MCF 10A (cell line): ENCODE measurements at regions of chr12 and their contacts with region 1.

Region 1: DNA sequence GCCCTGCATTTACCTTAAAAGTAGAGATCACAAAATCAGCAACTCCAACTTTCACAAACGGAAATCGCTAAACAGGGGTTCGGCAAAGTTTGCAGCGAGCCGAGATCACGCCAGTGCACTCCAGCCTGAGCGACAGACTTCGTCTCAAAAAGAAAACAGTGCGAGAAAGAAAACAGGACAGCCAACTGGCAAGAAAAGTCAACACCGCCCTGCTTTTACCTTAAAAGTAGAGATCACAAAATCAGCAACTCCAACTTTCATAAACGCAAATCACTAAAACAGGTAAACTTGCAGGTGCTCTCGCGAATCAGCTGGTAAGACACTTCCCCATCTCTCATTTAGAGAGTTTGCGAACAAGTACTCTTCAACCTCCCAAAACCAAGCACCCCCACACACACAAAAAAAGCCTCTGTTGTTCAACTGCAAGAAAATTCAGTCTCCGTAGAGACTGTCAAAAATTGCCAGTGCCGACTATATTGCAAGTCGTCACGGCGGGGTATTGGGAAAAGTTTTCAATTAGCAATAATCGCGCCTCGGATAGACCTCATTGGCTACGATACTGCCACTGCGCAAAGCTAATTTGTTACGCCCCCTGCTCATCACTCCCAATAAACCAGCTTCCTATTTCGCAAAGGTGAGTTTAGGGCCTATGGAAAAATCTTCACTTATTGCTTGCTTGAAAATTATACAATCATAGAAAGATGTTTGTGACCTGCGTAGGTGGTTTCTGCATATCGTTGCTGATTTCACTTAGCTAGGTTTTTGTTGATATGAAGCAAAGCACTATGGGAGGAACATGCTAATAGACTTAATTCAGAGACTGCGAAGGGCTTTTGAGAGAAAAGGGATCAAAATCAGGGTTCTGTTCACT is at the start of gene RNU4-1:
- DNase-seq: peak; percentile 95
- H3K4me3 Mint-ChIP-seq: no peak within 1 kb of the TSS
- H3K27ac Mint-ChIP-seq: no peak within 1 kb of the TSS
- H3K4me1 Mint-ChIP-seq: no peaks in the 10 kb centered on the region
- H3K27me3 Mint-ChIP-seq: no peaks in the 10 kb centered on the region
- CTCF ChIP-seq: no peak
- total RNA-seq, gene RNU4-1: 1,764 and 2,069 TPM in 2 replicates

Region 2: DNA sequence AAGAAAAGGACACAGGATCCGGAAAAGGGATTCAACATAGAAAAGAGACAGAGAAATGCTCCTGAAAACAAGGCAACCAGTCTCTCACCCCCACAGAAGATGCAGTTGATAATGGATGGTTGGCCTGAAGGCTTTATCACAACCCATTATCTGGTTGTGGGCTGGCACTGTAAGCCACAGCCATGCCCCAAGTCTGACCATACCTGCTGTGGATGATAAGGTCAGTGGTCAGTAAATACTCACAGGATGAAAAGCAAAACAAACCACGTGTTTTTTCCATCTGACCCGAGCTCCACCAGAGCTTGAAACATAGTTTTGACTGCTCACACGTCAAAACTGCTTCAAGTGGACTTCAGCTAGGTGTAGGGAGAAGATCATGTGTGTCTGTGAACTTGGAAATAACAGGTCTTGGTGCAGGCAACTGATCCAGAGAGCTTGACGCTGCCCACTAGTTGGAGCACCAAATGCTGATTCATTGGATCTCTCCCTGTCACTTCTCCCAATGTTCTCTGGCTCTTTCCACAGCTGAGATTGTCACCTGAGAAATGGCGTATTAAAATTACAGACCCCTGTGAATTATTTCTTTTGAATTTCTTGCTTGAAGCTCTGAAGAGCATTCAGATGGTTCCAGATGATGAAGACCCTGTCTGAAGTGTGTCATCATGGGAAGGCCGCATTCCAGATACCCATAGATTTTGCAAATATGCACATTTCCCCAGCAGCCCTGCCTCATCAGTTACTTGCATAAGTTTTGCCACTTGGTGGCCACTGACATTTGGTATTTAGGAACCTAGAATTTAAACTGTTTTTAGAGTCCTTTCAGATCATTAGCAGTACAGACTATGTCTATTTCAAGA is 690.8 kb before region 1 on chr12:
- CTCF ChIA-PET with region 1: no interaction called
- POLR2A ChIA-PET with region 1: no interaction called
- intact Hi-C with region 1: no loop called
- DNase-seq: no peak
- H3K4me3 Mint-ChIP-seq: no peak overlapping the region
- H3K27ac Mint-ChIP-seq: no peak overlapping the region
- H3K4me1 Mint-ChIP-seq: no peaks in the 10 kb centered on the region
- H3K27me3 Mint-ChIP-seq: peaks cover 26% of the 10 kb centered on the region
- CTCF ChIP-seq: no peak

Region 3: DNA sequence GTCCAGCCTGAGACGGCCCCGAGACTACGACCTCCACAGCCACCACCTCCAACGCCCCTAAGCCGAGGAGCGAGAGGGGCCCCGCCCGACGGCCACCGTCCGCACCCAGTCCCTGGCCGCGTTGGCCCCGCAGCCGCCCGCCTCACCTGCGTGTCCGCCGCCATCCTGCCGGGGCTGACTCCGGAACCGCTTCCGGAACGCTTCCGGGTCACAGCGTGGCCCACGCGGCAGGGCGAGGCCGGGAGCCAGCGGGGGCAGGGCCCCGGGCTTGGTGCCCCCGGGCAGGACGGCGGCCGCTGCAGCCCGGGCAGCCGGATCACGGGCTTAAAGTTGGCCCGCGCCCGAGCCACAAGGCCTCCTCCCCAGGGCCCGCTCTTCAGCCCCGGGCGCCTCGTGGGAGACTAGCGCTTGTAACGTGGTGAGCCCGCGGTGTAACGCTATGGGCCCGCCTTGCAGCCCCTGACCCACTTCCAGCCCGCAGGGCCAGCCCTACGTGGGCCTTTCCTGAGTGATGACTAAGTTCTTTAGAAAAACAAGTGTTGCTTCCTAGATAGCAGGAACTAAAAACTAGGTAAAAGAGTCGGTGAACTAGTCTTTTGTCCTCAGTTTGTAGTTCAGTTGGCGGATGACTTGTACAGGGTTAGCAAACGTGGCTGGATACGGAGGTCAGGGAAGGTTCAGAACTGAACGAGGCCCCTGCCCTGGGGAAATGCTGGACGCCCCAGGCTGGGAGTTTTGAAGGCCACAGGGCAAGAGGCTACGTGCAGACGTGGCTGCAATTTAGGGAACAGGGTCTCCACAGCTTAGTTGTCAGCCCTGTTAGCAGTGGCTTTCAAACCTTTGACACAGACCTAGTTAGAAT is 98.1 kb before region 1 on chr12 and contains the start of gene GCN1:
- CTCF ChIA-PET with region 1: interaction called, 3 read pairs
- POLR2A ChIA-PET with region 1: interaction called, 109 read pairs
- intact Hi-C with region 1: no loop called
- DNase-seq: peak; percentile 82
- H3K4me3 Mint-ChIP-seq: peak within 1 kb of the TSS; percentile 80
- H3K27ac Mint-ChIP-seq: peak within 1 kb of the TSS; percentile 89
- H3K4me1 Mint-ChIP-seq: peaks cover 23% of the 10 kb centered on the region
- H3K27me3 Mint-ChIP-seq: no peaks in the 10 kb centered on the region
- CTCF ChIP-seq: no peak
- total RNA-seq, gene GCN1: 116 and 117 TPM in 2 replicates

Region 4: DNA sequence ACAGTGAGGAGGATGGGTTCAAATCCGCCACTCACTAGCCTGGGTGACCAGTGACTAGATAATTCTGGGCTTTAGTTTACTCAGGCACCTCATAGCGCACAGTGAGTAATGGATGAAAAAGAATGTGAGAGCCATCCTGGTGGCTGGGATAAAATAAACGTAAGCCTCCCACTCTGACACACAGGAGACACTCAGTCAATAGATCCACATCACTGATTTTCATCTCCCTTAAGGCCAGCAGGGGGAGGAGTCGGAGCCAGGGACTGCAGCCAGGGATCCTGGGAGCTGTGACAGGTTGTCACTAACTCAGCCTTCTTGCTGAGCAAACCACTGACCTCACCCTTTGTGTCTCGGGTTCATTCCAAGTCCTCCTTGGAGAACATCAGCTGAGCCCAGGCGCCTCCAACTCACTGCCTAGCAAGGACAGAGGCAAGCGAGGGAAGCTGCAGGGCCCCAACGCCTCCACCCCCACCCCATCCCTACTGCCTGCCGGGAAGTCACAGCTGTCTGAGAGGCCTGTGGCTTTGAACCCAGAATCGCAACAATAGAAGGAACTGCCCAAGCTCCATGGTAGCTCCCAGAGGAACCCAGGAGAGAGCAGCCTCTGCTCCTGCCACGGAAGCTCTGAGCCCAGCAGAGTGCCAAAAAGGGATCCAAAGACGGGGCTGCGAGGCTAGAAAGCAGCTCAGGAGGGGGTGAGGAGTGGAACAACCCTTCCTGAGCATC is 58.1 kb before region 1 on chr12:
- CTCF ChIA-PET with region 1: interaction called, 3 read pairs
- POLR2A ChIA-PET with region 1: interaction called, 125 read pairs
- intact Hi-C with region 1: loop called (anchors 1 kb)
- DNase-seq: peak; percentile 92
- H3K4me3 Mint-ChIP-seq: peak overlapping the region; percentile 27
- H3K27ac Mint-ChIP-seq: peak overlapping the region; percentile 79
- H3K4me1 Mint-ChIP-seq: peaks cover 74% of the 10 kb centered on the region
- H3K27me3 Mint-ChIP-seq: no peaks in the 10 kb centered on the region
- CTCF ChIP-seq: peak; percentile 35

Region 5: GRCh38 chr12:120257041-120257821 is 35.7 kb before region 1 on chr12:
- CTCF ChIA-PET with region 1: no interaction called
- POLR2A ChIA-PET with region 1: interaction called, 112 read pairs
- intact Hi-C with region 1: no loop called
- DNase-seq: peak; percentile 93
- H3K4me3 Mint-ChIP-seq: peak overlapping the region; percentile 30
- H3K27ac Mint-ChIP-seq: peak overlapping the region; percentile 75
- H3K4me1 Mint-ChIP-seq: peaks cover 62% of the 10 kb centered on the region
- H3K27me3 Mint-ChIP-seq: no peaks in the 10 kb centered on the region
- CTCF ChIP-seq: no peak

Region 6: GRCh38 chr12:120317224-120318105 is 24.6 kb after region 1 on chr12:
- CTCF ChIA-PET with region 1: no interaction called
- POLR2A ChIA-PET with region 1: interaction called, 38 read pairs
- intact Hi-C with region 1: no loop called
- DNase-seq: peak; percentile 100
- H3K4me3 Mint-ChIP-seq: peak overlapping the region; percentile 95
- H3K27ac Mint-ChIP-seq: peak overlapping the region; percentile 97
- H3K4me1 Mint-ChIP-seq: peaks cover 15% of the 10 kb centered on the region
- H3K27me3 Mint-ChIP-seq: no peaks in the 10 kb centered on the region
- CTCF ChIP-seq: peak; percentile 54

Region 7: DNA sequence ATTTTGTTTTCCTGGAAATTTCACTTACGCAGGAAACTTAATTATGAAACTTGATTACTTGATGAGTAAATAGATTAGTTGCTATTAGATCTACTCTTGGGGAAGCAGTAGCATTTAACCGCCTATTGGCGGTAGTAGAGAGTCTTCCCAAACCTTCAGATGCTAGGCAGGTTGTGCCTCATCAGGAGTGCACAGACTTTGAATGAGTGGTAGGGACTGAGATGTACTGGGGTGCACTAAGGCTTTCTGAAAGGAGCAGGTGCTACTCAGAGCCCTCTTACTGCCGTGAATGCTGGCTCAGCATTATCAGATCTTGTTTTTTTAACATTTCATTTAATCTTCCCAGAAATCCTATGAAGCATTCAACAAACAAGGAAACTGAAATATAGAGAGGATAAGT is 161.1 kb after region 1 on chr12:
- CTCF ChIA-PET with region 1: no interaction called
- POLR2A ChIA-PET with region 1: no interaction called
- intact Hi-C with region 1: no loop called
- DNase-seq: peak; percentile 46
- H3K4me3 Mint-ChIP-seq: no peak overlapping the region
- H3K27ac Mint-ChIP-seq: no peak overlapping the region
- H3K4me1 Mint-ChIP-seq: no peaks in the 10 kb centered on the region
- H3K27me3 Mint-ChIP-seq: no peaks in the 10 kb centered on the region
- CTCF ChIP-seq: peak; percentile 58

Region 8: DNA sequence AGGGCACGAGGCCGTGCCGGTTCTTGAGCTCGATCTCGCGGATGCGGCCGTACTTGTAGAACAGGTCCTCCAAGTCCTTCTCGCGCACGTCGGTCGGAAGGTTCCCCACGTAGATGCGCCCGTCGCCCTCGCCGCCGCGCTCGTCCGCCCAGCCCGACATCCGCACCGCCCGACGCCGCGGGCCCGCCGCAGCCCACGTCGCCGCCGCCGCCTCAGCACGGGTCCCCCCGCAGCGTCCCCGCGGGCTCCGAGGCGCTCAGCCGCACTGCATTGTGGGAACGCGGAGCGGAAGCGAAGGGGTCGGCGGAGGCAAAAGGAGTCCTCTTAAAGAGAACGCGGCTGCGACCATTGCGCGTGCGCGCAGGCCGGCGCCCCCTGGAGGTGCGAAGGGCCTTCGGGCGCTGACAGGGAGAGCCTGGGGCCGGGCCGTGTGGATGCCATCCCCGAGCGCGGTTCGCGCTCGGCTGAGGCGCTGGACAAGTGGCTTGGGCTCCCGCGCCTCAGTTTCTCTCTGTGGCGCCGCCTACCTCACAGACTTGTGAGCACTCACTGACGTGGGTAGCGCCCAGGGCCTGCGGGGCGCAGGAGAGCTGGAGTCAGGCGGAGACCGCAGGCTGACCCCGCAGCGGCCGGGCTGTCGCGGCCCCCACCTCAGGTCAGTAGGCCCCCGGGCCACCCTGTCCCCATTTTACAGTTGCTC is 176.7 kb after region 1 on chr12 and contains the start of gene SRSF9:
- CTCF ChIA-PET with region 1: interaction called, 4 read pairs
- POLR2A ChIA-PET with region 1: interaction called, 11 read pairs
- intact Hi-C with region 1: no loop called
- DNase-seq: peak; percentile 95
- H3K4me3 Mint-ChIP-seq: peak within 1 kb of the TSS; percentile 88
- H3K27ac Mint-ChIP-seq: peak within 1 kb of the TSS; percentile 75
- H3K4me1 Mint-ChIP-seq: peaks cover 19% of the 10 kb centered on the region
- H3K27me3 Mint-ChIP-seq: no peaks in the 10 kb centered on the region
- CTCF ChIP-seq: peak; percentile 93
- total RNA-seq, gene SRSF9: 192 and 193 TPM in 2 replicates